Activated CD8-positive, alpha-beta memory T cell treated with anti-CD3 and anti-CD28 coated beads, Interleukin-2, amount 10 ng/mL, durations not matched to agents 7 days and 5 days (primary cell): ENCODE measurements at regions of chr2 and their contacts with region 1.

Region 1: DNA sequence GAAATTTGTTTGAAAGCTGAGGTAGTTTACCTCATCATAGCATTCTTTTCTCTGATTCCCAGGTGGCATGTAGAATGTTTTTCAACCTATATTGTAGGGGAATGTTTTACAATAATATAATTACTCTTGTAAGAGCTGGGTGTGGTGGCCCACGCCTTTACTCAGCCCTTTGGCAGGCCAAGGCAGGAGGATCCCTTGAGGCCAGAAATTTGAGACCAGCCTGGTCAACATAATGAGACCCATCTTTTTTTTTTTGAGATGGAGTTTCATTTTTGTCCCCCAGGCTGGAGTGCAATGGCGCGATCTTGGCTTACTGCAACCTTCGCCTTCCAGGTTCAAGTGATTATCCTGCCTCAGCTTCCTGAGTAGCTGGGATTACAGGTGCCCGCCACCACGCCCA is 3.6 kb downstream of the USP39 start:
- DNase-seq: no peak
- ATAC-seq: no peak
- H3K4me3 Mint-ChIP-seq: no peak overlapping the region
- H3K27ac Mint-ChIP-seq: peak overlapping the region; percentile 59
- H3K4me1 Mint-ChIP-seq: peaks cover 36% of the 10 kb centered on the region
- H3K27me3 Mint-ChIP-seq: no peaks in the 10 kb centered on the region

Region 2: GRCh38 chr2:85635636-85636035 is 16.0 kb after region 1 on chr2:
- CTCF ChIA-PET with region 1: interaction called, 30 read pairs
- DNase-seq: no peak
- ATAC-seq: no peak
- H3K4me3 Mint-ChIP-seq: no peak overlapping the region
- H3K27ac Mint-ChIP-seq: no peak overlapping the region
- H3K4me1 Mint-ChIP-seq: peaks cover 13% of the 10 kb centered on the region
- H3K27me3 Mint-ChIP-seq: no peaks in the 10 kb centered on the region

Region 3: DNA sequence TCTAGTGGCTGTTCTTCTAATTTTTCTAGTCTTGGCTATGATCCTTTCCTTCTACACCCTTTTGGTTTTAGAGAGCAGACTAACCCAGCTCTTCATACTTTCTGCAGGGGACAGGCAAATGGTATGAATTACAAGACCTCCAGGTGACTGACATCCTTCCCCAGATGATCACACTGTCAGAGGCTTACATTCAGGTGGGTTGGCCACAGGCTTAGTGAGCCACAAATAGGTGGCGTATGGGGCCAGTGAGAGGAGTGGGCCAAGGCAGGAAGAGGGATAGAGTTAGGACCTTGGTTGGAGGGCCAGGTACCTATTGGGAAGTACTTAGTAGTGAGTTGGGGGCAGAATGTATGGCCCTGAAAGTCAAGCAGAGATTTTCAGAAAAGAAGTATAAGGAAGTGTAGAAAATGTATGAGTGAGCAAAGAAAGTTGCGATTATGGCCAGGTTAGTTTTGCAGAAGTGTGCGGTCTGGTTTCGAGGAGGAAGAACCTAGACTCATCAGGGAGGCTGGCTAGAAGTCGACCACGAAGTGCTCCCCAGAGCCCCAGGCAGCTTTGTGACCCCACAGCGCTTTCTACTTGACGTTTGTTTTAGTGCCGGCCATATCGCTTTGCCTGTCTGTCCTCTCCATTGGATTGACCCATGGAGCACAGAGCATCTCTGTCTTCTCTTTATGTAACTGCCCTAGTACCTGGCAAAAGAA is 28.4 kb after region 1 on chr2:
- CTCF ChIA-PET with region 1: no interaction called
- DNase-seq: no peak
- ATAC-seq: no peak
- H3K4me3 Mint-ChIP-seq: no peak overlapping the region
- H3K27ac Mint-ChIP-seq: peak overlapping the region; percentile 22
- H3K4me1 Mint-ChIP-seq: peaks cover 7% of the 10 kb centered on the region
- H3K27me3 Mint-ChIP-seq: no peaks in the 10 kb centered on the region